MCF 10A (cell line): ENCODE measurements at regions of chr1 and their contacts with region 1.

Region 1: DNA sequence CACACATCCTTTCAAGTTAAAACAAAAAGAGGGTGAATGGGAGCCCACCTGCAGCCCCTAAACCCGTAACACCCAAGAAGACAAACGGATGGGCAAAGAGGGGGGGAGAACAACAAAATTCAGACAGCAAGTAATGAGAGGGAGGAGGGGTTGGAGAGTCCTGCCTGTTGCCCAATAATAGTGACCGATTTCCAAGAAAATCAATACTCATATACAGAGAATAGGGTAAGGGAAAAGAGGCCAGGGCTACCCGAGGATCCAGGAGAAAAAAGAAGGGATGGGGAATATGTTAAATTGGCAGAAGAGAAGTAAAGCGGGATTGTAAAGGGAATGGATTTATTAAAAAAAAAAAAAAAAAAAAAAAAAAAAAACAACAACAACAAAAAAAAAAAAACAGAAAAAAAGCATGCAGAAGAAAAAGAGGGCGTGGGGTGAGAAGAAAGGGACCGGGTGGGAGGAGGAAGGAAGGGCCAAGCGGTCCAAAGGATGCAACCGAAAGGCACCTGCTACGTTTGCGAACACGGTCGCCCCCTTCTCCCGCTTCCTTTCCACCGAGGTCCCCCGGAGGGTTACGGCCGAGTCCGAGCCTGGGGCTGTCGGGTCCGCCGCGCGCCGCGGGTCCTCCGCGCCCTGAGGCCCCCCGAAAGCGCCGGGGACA is 930 bp downstream of the SLC30A10 start:
- DNase-seq: no peak
- H3K4me3 Mint-ChIP-seq: no peak overlapping the region
- H3K27ac Mint-ChIP-seq: no peak overlapping the region
- H3K4me1 Mint-ChIP-seq: peaks cover 9% of the 10 kb centered on the region
- H3K27me3 Mint-ChIP-seq: peaks cover 4% of the 10 kb centered on the region
- CTCF ChIP-seq: no peak

Region 2: DNA sequence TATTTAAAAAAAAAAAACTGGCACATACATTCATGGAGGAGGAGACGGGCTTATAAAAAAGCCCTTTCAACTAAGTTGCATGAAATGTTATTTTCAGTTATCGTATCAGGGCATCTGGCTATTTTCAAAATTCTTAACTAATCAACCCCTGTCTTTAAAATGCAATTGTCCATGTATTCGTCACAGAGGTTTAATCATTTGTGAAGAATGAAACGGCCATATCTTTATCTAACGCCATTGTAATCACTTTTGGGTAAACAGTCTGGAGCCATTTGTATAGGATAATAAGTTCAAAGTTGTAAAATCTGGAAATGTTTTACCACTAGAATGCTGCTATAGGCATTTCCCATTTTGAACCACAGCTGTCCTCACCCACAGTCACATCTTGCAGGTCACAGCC is 29.5 kb before region 1 on chr1:
- CTCF ChIA-PET with region 1: no interaction called
- POLR2A ChIA-PET with region 1: no interaction called
- intact Hi-C with region 1: no loop called
- DNase-seq: no peak
- H3K4me3 Mint-ChIP-seq: no peak overlapping the region
- H3K27ac Mint-ChIP-seq: no peak overlapping the region
- H3K4me1 Mint-ChIP-seq: no peaks in the 10 kb centered on the region
- H3K27me3 Mint-ChIP-seq: peaks cover 68% of the 10 kb centered on the region
- CTCF ChIP-seq: no peak

Region 3: DNA sequence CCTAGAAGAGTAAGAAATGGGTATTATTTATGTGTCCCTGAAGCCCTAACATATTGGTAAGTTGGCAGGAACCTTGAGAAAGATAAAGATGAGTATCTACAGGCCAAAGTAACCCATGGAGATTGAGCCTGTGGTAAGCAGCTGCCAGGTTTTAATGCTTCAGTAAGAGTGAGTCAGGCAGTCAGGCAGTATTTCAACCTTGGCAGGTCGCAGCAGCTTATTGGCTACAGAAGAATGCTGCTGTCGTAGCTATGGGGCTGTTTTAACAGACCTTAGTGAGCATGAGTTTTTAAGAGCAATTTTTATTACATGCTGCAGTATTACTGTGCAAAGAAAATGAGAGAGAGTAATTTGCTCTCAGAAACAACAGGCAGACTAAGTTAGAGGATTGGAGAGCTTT is 11.3 kb after region 1 on chr1:
- CTCF ChIA-PET with region 1: interaction called, 5 read pairs
- POLR2A ChIA-PET with region 1: interaction called, 16 read pairs
- intact Hi-C with region 1: no loop called
- DNase-seq: peak; percentile 56
- H3K4me3 Mint-ChIP-seq: no peak overlapping the region
- H3K27ac Mint-ChIP-seq: no peak overlapping the region
- H3K4me1 Mint-ChIP-seq: no peaks in the 10 kb centered on the region
- H3K27me3 Mint-ChIP-seq: peaks cover 66% of the 10 kb centered on the region
- CTCF ChIP-seq: no peak